Dorsolateral prefrontal cortex (tissue), 120 donors: ENCODE measurements at regions of chr7 and their contacts with region 1.

Region 1: DNA sequence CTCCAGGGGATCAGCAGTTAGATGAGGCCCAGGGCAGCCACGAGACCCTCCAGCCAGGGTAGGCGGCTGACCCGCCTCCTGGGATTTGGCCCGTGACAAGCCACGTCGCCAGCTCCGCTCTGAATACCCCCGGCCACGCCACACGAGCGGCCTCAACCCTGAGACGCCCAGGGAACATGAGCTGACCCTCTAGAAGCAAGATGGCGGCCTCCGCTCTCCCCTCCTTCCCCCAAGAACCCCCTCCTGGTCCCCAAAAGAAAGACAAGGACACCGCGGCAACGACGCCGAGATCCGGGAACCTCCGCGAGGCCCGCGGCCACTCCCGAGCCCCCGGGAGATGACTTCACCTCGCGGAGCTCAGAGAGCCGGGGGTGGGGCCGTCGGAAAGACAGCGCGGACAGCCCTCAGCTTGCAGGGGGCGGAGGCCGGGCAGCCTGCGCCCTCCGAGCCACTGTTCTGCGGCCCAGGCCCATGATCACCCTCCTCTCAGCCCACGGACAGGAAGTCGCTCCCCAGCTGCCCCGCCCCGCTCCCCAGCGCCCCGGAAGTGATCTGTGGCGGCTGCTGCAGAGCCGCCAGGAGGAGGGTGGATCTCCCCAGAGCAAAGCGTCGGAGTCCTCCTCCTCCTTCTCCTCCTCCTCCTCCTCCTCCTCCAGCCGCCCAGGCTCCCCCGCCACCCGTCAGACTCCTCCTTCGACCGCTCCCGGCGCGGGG is at the start of gene RALA:
- DNase-seq: peak; percentile 87 to 96 (median 92)
- H3K4me3 ChIP-seq: peak within 1 kb of the TSS; percentile 58 to 96 (median 90)
- H3K27ac ChIP-seq: peak within 1 kb of the TSS; percentile 10 to 96 (median 88)
- H3K27me3 ChIP-seq: no peaks in the 10 kb centered on the region
- CTCF ChIP-seq: peak in 24 of 56 donors; percentile 4 to 53 (median 30)
- total RNA-seq, gene RALA: 20.4 to 35.1 (median 28.8) TPM

Region 2: GRCh38 chr7:39566023-39566921 is 56.9 kb before region 1 on chr7 and contains the start of gene YAE1:
- intact Hi-C with region 1: loop called (anchors 2 to 5 kb)
- DNase-seq: peak; percentile 79 to 93 (median 88)
- H3K4me3 ChIP-seq: peak within 1 kb of the TSS; percentile 58 to 97 (median 85)
- H3K27ac ChIP-seq: peak within 1 kb of the TSS in 56 of 59 donors; percentile 5 to 89 (median 75)
- H3K27me3 ChIP-seq: no peaks in the 10 kb centered on the region
- CTCF ChIP-seq: peak in 21 of 56 donors; percentile 5 to 40 (median 25)
- total RNA-seq, gene YAE1: 18.7 to 42.0 (median 30.4) TPM

Region 3: GRCh38 chr7:39589323-39590111 is 33.7 kb before region 1 on chr7:
- intact Hi-C with region 1: loop called in 1 of 2 experiments (anchors 5 kb)
- DNase-seq: no peak
- H3K4me3 ChIP-seq: no peak overlapping the region
- H3K27ac ChIP-seq: no peak overlapping the region
- H3K27me3 ChIP-seq: no peaks in the 10 kb centered on the region
- CTCF ChIP-seq: no peak

Region 4: DNA sequence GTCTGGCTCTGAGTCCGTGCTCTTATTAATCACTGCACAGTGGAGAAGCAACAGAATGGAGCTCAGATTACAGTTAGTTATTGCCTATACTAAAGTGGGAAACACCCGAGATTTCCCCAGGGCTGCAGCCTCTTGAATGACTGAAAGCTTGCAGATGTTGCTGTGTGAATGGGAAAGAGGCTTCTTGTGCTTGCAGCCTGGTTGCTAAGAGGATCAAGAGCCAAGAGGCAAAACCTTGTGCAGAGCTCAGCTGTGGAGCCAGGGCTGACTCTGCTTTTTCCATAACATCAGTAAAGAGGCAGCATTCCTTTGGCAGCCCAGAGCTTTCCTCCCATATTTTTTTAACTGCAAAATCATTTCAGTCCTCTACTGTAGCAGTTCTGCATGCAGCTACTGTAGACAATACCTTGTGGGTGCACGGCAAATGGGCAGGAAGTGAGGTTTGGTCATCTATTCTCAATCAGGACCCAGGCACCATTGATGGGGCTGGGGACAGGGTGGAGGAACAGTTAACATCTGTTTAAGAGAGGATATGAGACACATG is 86.7 kb after region 1 on chr7:
- intact Hi-C with region 1: no loop called
- DNase-seq: peak in 1 of 10 donors; percentile 24
- H3K4me3 ChIP-seq: no peak overlapping the region
- H3K27ac ChIP-seq: no peak overlapping the region
- H3K27me3 ChIP-seq: no peaks in the 10 kb centered on the region
- CTCF ChIP-seq: no peak

Region 5: GRCh38 chr7:39732837-39733804 is 109.9 kb after region 1 on chr7:
- intact Hi-C with region 1: loop called (anchors 5 kb)
- DNase-seq: peak; percentile 93 to 98 (median 96)
- H3K4me3 ChIP-seq: peak overlapping the region; percentile 54 to 89 (median 73)
- H3K27ac ChIP-seq: peak overlapping the region in 58 of 59 donors; percentile 19 to 90 (median 74)
- H3K27me3 ChIP-seq: no peaks in the 10 kb centered on the region
- CTCF ChIP-seq: peak in 14 of 56 donors; percentile 6 to 52 (median 19)

Region 6: GRCh38 chr7:39746103-39746819 is 123.1 kb after region 1 on chr7:
- intact Hi-C with region 1: loop called (anchors 1 to 5 kb)
- DNase-seq: peak; percentile 50 to 84 (median 78)
- H3K4me3 ChIP-seq: no peak overlapping the region
- H3K27ac ChIP-seq: no peak overlapping the region
- H3K27me3 ChIP-seq: no peaks in the 10 kb centered on the region
- CTCF ChIP-seq: peak; percentile 46 to 91 (median 78)

Region 7: GRCh38 chr7:39948956-39949928 is 326.1 kb after region 1 on chr7:
- intact Hi-C with region 1: loop called in 1 of 2 experiments (anchors 2 kb)
- DNase-seq: peak; percentile 95 to 99 (median 98)
- H3K4me3 ChIP-seq: peak overlapping the region; percentile 65 to 98 (median 92)
- H3K27ac ChIP-seq: peak overlapping the region; percentile 91 to 100 (median 98)
- H3K27me3 ChIP-seq: no peaks in the 10 kb centered on the region
- CTCF ChIP-seq: peak in 37 of 56 donors; percentile 6 to 62 (median 33)

Region 8: GRCh38 chr7:40134428-40135316 is 511.5 kb after region 1 on chr7 and contains the starts of genes MPLKIP and SUGCT:
- intact Hi-C with region 1: loop called in 1 of 2 experiments (anchors 10 kb)
- DNase-seq: peak; percentile 67 to 91 (median 80)
- H3K4me3 ChIP-seq: peak within 1 kb of the TSS; percentile 73 to 99 (median 91)
- H3K27ac ChIP-seq: peak within 1 kb of the TSS; percentile 60 to 97 (median 92)
- H3K27me3 ChIP-seq: no peaks in the 10 kb centered on the region
- CTCF ChIP-seq: peak; percentile 77 to 99 (median 94)
- total RNA-seq, gene MPLKIP: 15.8 to 40.1 (median 27.3) TPM
- total RNA-seq, gene SUGCT: 1.4 to 11.5 (median 3.3) TPM